ENCODE measurements at regions of chr1 and their contacts with region 1.

Region 1: GRCh38 chr1:244047621-244048471 is 3.2 kb upstream of the ZBTB18 start:
- DNase-seq: peak; percentile 100
- H3K4me3 ChIP-seq: peak overlapping the region; percentile 66 to 86 (median 77)
- H3K27ac ChIP-seq: peak overlapping the region; percentile 93
- H3K4me1 ChIP-seq: peaks cover 33% of the 10 kb centered on the region
- H3K27me3 ChIP-seq: no peaks in the 10 kb centered on the region
- CTCF ChIP-seq: no peak
- POLR2A ChIP-seq: peak; percentile 85

Region 2: GRCh38 chr1:243748706-243749283 is 299.1 kb before region 1 on chr1:
- CTCF ChIA-PET with region 1: no interaction called
- POLR2A ChIA-PET with region 1: no interaction called
- dilution Hi-C with region 1: no loop called
- intact Hi-C with region 1: loop called (anchors 5 kb)
- DNase-seq: peak; percentile 79
- H3K4me3 ChIP-seq: no peak overlapping the region
- H3K27ac ChIP-seq: no peak overlapping the region
- H3K4me1 ChIP-seq: peaks cover 4% of the 10 kb centered on the region
- H3K27me3 ChIP-seq: no peaks in the 10 kb centered on the region
- CTCF ChIP-seq: peak; percentile 55 to 58
- POLR2A ChIP-seq: no peak

Region 3: GRCh38 chr1:243917177-243917862 is 130.5 kb before region 1 on chr1:
- CTCF ChIA-PET with region 1: no interaction called
- POLR2A ChIA-PET with region 1: interaction called, 5 read pairs
- dilution Hi-C with region 1: no loop called
- intact Hi-C with region 1: loop called (anchors 2 kb)
- DNase-seq: peak; percentile 79
- H3K4me3 ChIP-seq: peak overlapping the region; percentile 0 to 42 (median 17)
- H3K27ac ChIP-seq: peak overlapping the region; percentile 82
- H3K4me1 ChIP-seq: peaks cover 18% of the 10 kb centered on the region
- H3K27me3 ChIP-seq: no peaks in the 10 kb centered on the region
- CTCF ChIP-seq: no peak
- POLR2A ChIP-seq: no peak

Region 4: DNA sequence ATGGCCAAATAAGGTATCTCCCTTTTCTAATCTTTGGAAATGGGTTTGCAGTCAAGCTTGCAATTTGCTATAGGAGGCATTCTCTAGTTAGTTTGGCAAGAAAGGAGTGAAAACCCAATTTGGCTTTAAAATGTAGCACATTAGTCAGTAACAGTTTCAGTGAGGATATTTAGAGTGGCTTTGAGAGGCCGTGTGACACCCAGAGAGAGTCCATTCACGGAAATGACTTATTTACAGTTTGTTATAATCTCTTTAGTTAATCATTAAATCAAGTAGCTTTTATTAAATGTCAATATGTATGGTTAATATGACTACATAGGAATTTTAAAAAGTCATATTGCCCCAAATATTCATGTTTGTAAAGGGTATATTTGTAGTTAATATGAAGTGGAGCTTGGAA is 12.8 kb after region 1 on chr1:
- CTCF ChIA-PET with region 1: interaction called, 13 read pairs
- POLR2A ChIA-PET with region 1: no interaction called
- dilution Hi-C with region 1: no loop called
- intact Hi-C with region 1: no loop called
- DNase-seq: no peak
- H3K4me3 ChIP-seq: no peak overlapping the region
- H3K27ac ChIP-seq: no peak overlapping the region
- H3K4me1 ChIP-seq: no peaks in the 10 kb centered on the region
- H3K27me3 ChIP-seq: no peaks in the 10 kb centered on the region
- CTCF ChIP-seq: no peak
- POLR2A ChIP-seq: no peak

Region 5: GRCh38 chr1:244137725-244138124 is 89.9 kb after region 1 on chr1:
- CTCF ChIA-PET with region 1: interaction called, 3 read pairs
- POLR2A ChIA-PET with region 1: no interaction called
- dilution Hi-C with region 1: no loop called
- intact Hi-C with region 1: loop called (anchors 1 kb)
- DNase-seq: no peak
- H3K4me3 ChIP-seq: no peak overlapping the region
- H3K27ac ChIP-seq: peak overlapping the region; percentile 75
- H3K4me1 ChIP-seq: peaks cover 26% of the 10 kb centered on the region
- H3K27me3 ChIP-seq: no peaks in the 10 kb centered on the region
- CTCF ChIP-seq: no peak
- POLR2A ChIP-seq: no peak

Region 6: DNA sequence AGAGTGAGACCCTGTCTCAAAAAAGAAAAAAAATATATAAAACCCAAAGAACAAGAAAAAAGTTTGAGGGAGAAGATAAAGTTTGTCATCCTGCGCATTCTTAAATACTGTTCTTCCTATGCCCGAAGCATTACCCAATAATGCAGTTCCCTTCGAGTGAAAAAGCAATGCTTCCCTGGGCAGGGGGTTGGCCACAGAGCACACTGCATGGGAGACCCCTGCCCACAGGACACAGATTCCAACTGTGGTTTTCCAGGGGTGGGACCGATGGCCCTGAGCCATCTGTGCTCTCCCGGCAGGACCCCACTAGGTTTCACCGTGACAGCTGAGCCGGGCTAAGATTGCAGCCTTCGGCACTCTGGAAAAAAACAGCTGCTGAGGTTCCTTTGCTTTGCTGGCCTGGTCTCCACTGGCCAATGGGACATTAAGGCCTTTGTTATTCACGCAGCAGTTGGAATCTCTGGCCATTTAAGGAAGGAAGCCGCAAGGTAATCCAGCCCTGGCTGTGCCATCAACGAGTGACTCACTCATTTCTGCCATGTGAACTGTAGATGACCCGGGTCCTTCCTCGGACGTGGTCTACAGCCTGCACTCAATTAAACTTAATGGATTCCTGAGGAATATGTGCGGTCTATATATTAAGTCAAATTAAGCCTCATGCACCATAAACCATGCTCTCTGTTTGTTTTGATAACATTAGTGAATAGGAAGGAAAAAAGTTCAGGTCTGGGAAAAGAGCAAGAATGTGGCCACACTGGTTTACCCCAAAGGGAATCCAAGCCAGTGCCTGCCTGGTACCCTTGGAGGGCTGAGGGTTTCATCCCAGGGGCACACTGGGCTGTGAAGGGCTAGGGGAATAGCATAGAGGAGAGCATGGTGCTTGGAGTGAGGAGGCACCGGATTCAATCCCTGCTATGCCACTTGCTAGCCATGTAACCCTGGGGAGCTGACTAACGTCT is 166.4 kb after region 1 on chr1:
- CTCF ChIA-PET with region 1: no interaction called
- POLR2A ChIA-PET with region 1: no interaction called
- dilution Hi-C with region 1: no loop called
- intact Hi-C with region 1: loop called (anchors 1 kb)
- DNase-seq: peak; percentile 98
- H3K4me3 ChIP-seq: no peak overlapping the region
- H3K27ac ChIP-seq: peak overlapping the region; percentile 84
- H3K4me1 ChIP-seq: peaks cover 16% of the 10 kb centered on the region
- H3K27me3 ChIP-seq: no peaks in the 10 kb centered on the region
- CTCF ChIP-seq: no peak
- POLR2A ChIP-seq: peak; percentile 27

Region 7: DNA sequence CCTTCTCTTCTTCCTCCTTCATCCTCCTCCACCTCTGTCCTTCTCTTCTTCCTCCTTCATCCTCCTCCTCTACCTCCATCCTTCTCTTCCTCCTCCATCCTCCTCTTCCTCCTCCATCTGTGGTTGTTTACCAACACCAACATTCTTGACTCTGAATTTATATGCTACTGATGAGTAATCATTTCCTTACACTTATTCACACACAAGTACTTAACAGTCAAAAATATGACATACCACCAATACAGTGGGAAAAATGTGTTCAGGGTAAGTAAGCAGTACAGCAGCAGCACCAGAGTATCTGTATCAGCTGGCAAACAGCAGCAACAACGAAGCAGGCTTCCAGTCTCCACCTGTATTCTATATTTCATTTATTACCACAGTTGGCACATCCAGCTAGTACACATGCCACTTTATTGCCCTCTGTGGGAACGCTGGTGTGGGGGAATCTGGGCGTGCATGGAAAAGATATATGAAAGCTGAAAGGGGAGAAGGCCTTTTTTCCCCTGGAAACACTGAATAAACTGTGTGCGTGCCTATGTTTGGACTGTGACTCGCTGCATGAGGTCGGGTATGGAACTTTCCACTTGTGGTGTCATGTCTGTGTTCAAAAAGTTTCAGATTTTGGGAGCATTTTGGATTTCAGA is 387.8 kb after region 1 on chr1:
- CTCF ChIA-PET with region 1: no interaction called
- POLR2A ChIA-PET with region 1: no interaction called
- dilution Hi-C with region 1: no loop called
- intact Hi-C with region 1: loop called (anchors 5 kb)
- DNase-seq: peak; percentile 82
- H3K4me3 ChIP-seq: no peak overlapping the region
- H3K27ac ChIP-seq: peak overlapping the region; percentile 75
- H3K4me1 ChIP-seq: peaks cover 37% of the 10 kb centered on the region
- H3K27me3 ChIP-seq: no peaks in the 10 kb centered on the region
- CTCF ChIP-seq: no peak
- POLR2A ChIP-seq: no peak

Measured in endothelial cell of umbilical vein (primary cell).